Heart right ventricle (tissue), 16 donors: ENCODE measurements at regions of chr15 and their contacts with region 1.

Region 1: GRCh38 chr15:73518180-73518862 is 75.4 kb downstream of the REC114 start:
- DNase-seq: peak in 1 of 2 donors; percentile 11
- ATAC-seq: peak in 5 of 8 donors; percentile 43 to 79 (median 51)
- H3K4me3 ChIP-seq: no peak overlapping the region
- H3K27ac ChIP-seq: peak overlapping the region in 9 of 10 donors; percentile 18 to 78 (median 71)
- H3K4me1 ChIP-seq: peaks cover 0 to 25% (median 9%) of the 10 kb centered on the region in 9 donors
- H3K27me3 ChIP-seq: no peaks in the 10 kb centered on the region
- CTCF ChIP-seq: no peak

Region 2: GRCh38 chr15:73370151-73370550 is 148.2 kb before region 1 on chr15:
- intact Hi-C with region 1: loop called in 1 of 10 experiments (anchors 5 kb)
- DNase-seq: no peak
- ATAC-seq: no peak
- H3K4me3 ChIP-seq: no peak overlapping the region
- H3K27ac ChIP-seq: no peak overlapping the region
- H3K4me1 ChIP-seq: peaks cover 0 to 23% (median 9%) of the 10 kb centered on the region in 9 donors
- H3K27me3 ChIP-seq: peaks cover 5 to 77% (median 64%) of the 10 kb centered on the region in 7 donors
- CTCF ChIP-seq: no peak

Region 3: DNA sequence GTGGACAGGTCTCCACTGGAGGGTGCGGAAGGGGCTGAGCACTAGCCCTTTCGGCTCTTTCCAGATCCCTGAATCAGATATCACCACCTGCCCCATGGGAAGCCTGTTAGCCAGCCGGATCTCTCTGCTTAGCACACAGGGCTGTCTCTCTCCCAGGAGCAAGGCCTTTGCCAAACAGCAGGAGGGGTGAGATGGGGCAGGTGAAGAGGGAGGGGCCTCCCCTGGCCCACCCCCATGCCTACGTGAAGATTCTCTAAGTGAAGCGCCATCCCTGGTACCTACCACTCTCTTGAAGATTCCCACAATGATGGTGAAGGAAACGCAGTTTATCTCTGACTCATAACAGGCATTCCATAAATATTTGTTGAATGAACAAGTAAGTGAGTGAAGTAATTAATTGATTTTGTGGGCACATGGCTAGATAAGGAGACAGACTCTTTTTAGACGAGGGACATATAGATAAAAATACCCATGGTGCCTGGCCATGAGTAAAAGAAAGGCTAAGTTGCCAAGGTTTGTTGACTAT is 130.0 kb before region 1 on chr15:
- intact Hi-C with region 1: loop called in 3 of 10 experiments (anchors 5 to 10 kb)
- DNase-seq: no peak
- ATAC-seq: peak in 6 of 8 donors; percentile 32 to 83 (median 54)
- H3K4me3 ChIP-seq: no peak overlapping the region
- H3K27ac ChIP-seq: peak overlapping the region in 3 of 10 donors; percentile 20 to 56 (median 26)
- H3K4me1 ChIP-seq: peaks cover 0 to 25% (median 12%) of the 10 kb centered on the region in 9 donors
- H3K27me3 ChIP-seq: peaks cover 0 to 25% (median 11%) of the 10 kb centered on the region in 7 donors
- CTCF ChIP-seq: no peak

Region 4: GRCh38 chr15:73394782-73395181 is 123.5 kb before region 1 on chr15:
- intact Hi-C with region 1: loop called in 3 of 10 experiments (anchors 5 to 10 kb)
- DNase-seq: peak; percentile 67 to 69
- ATAC-seq: peak; percentile 82 to 98 (median 94)
- H3K4me3 ChIP-seq: no peak overlapping the region
- H3K27ac ChIP-seq: no peak overlapping the region
- H3K4me1 ChIP-seq: peaks cover 0 to 39% (median 12%) of the 10 kb centered on the region in 9 donors
- H3K27me3 ChIP-seq: peaks cover 0 to 13% (median 0%) of the 10 kb centered on the region in 7 donors
- CTCF ChIP-seq: no peak

Region 5: GRCh38 chr15:73442968-73443367 is 75.4 kb before region 1 on chr15 and contains the start of gene REC114:
- intact Hi-C with region 1: no loop called
- DNase-seq: no peak
- ATAC-seq: no peak
- H3K4me3 ChIP-seq: no peak within 1 kb of the TSS
- H3K27ac ChIP-seq: no peak within 1 kb of the TSS
- H3K4me1 ChIP-seq: no peaks in the 10 kb centered on the region
- H3K27me3 ChIP-seq: peaks cover 0 to 34% (median 15%) of the 10 kb centered on the region in 7 donors
- CTCF ChIP-seq: no peak
- total RNA-seq, gene REC114: 0.28 to 0.62 (median 0.44) TPM in 4 of 10 donors, not detected in the others

Region 6: DNA sequence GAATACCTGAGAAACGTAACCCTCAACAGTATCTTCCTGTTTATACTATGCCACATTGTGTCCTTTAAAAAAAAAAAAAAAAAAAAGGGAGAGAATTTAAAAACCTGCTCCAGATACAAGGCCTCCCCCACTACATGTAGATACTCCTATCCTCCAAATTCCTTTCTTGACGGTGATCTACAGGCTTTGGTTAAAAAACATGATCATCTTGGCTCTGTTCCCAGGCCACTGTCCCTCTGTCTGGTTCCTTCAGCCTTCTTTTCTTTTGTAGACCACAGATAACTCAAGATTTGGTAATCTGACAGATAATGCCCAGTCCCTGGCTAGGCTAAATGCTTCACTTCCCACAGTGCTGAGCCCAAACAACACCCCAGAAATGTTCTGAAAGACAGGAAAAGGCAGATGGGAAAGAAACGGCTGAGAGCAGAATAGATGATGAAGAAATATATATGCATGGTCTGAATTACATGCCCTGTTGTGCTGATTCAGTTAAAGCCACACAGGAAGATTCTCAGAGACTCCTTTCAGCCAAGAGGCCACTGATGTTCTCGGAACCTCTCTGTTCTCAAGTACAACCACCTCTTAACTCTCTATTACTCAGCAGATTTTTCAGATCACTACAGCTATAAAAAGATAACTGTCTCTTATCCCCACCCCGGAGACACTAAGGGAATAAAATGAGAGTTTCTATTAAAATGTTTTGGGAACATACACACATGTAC is 66.5 kb after region 1 on chr15:
- intact Hi-C with region 1: no loop called
- DNase-seq: no peak
- ATAC-seq: no peak
- H3K4me3 ChIP-seq: no peak overlapping the region
- H3K27ac ChIP-seq: no peak overlapping the region
- H3K4me1 ChIP-seq: peaks cover 0 to 14% (median 0%) of the 10 kb centered on the region in 9 donors
- H3K27me3 ChIP-seq: no peaks in the 10 kb centered on the region
- CTCF ChIP-seq: no peak